ENCODE measurements at regions of chr5 and their contacts with region 1.

Region 1: GRCh38 chr5:179907570-179908324 is at the start of gene TBC1D9B:
- DNase-seq: peak; percentile 75
- ATAC-seq: peak; percentile 89 to 95
- total RNA-seq, gene TBC1D9B: 43.5 to 53.5 TPM

Region 2: DNA sequence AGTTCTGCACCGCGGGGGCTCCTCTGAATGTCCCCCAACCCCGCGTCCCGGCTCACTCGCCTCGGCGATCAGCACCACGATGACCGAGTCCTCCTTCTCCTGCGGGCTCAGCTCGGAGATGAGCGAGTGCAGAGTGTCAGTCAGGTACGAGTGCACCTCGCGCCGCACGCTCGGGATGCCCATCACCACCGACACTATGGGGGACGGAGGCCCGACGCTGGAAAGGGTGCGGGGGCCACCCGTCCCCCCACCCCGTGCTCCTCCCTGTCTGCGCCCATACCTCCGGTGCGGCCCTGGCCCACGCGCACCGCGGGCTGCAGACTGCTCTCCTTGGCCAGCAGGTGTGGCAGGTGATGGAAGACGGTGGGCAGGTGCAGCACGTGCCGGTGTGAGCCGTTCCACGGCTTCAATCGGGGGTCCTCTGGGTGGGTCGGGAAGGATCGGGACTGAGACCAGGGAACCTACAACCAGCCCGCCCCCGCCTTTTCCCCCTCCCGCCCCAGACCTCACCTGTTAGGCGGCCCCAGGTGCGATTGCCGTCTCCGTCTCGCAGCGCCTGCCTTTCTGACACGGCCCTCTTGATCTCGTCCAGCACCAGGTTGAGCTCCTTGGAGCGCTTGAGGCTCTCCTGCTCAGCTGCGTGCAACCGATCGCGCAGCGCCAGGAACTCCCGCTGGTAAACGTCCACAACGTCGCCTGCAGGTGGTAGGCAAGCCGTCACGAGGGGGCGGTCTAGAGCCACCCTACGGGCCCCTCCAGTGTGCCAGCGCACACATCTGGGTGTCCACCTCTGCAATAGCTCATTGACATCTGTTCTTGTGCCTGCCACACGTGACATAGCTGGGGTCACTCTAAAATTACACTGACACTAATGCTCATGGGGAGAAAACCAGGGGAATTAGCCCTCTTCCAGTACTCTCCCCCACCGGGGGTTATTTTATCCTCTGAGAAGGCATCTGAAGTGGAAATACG is 106.2 kb before region 1 on chr5:
- intact Hi-C with region 1: loop called in 1 of 2 experiments (anchors 5 kb)
- DNase-seq: peak; percentile 81
- ATAC-seq: peak; percentile 11 to 12

Region 3: DNA sequence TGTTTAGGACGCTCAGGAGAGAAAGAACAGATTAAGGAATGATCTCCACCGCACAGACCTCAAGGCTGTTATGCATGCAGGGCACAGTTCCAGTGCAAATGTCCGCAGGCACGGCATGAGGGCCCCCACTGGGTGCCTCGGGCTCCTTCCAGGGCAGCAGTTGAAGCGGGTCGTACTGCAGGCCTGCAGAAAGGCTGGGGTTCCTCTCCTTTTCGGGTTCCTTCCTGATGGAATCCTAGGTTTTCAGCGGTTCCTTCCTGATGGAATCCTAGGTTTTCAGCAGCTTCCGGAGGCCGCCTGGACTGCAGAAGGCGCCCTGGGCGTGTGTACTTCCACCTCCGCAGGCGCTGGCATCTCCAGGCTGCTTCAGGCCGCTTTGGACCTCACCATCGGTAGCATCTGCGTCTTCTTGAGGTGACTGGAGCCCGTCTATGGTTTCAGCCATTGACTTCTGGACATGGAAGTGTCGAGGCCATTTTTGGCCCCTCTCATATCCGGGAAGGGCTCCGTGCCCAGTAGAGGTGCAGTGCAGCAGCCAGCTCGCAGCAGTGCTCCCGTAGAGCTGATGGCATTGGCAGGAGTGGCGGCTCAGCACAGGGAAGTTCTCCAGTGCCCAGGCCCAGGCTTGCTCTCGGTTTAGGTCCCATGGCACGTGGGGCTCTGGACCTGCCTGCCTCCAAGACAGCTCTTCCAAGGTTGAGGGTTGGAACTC is 95.5 kb before region 1 on chr5:
- intact Hi-C with region 1: no loop called
- DNase-seq: no peak
- ATAC-seq: no peak

Region 4: DNA sequence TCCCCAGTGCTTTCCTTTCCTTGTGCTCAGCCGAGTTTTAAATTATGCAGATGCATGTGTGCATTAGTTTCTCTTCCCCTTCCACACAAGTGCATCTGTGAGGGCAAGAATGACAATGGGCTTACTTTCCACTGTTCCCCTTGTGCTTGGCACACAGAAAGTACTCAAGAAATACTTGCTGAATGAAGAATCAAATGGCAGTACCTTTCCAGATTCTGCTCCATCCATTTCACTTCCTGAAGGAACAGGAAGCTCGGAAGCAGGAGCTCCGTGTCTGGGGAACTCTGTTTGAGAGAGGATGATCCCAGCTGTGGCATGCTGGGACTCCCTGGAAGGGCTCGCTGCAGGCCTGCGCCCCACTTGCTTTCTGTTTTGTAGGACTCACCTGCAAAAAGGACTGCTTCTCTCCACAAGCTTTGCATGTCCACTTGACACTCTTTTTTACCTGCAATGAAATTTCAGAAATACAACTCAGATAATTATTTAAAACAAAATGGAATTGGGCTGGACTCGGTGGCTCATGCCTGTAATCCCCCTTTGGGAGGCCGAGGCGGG is 54.7 kb before region 1 on chr5:
- intact Hi-C with region 1: no loop called
- DNase-seq: no peak
- ATAC-seq: no peak

Region 5: GRCh38 chr5:180071531-180072255 is 163.9 kb after region 1 on chr5 and contains the start of gene RNF130:
- intact Hi-C with region 1: loop called in 1 of 2 experiments (anchors 5 kb)
- DNase-seq: peak; percentile 95
- ATAC-seq: peak; percentile 96 to 97
- total RNA-seq, gene RNF130: 45.6 to 67.2 TPM